Right lobe of liver (tissue), 6 donors: ENCODE measurements at regions of chr2 and their contacts with region 1.

Region 1: GRCh38 chr2:134119713-134120164 is 134.1 kb upstream of the MGAT5 start:
- DNase-seq: peak; percentile 91 to 96 (median 93)
- ATAC-seq: peak; percentile 75 to 87 (median 83)
- H3K4me3 ChIP-seq: peak overlapping the region; percentile 76 to 82 (median 80)
- H3K27ac ChIP-seq: peak overlapping the region; percentile 73 to 91 (median 87)
- H3K4me1 ChIP-seq: peaks cover 0 to 22% (median 9%) of the 10 kb centered on the region in 4 donors
- H3K27me3 ChIP-seq: no peaks in the 10 kb centered on the region
- CTCF ChIP-seq: no peak
- POLR2A ChIP-seq: peak; percentile 86

Region 2: DNA sequence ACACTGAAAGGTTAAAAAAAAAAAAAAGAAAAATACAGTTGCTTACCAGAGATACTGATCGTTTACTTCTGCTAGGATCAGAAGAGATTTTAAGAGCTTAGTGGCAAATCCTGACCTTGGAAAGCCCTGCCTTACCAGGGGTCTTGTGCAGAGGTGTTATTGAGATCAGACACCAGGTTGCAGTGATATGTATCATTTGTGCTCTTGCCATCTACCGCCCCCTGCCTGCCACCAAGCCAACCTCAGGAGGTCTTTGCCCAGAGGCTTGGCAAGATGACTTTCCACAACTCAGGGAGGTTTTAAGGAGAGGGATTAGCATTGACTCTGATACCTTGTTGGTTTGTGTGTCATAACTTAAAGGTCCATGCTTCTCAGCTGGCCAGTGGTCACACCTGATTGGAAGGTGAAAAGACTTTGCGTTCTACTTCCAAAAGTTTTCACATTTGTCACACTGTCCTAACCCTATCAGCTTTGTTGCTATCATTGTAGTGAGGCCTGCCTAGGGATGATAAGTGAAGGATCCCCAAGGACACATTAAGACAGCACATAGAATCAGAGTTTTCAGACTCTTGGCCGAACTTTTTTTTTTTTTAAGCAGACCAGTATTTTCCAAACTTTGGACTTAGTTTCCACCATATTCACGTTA is 87.9 kb after region 1 on chr2:
- intact Hi-C with region 1: loop called in 1 of 2 experiments (anchors 10 kb)
- DNase-seq: peak; percentile 59 to 62 (median 60)
- ATAC-seq: peak; percentile 86 to 93 (median 90)
- H3K4me3 ChIP-seq: no peak overlapping the region
- H3K27ac ChIP-seq: no peak overlapping the region
- H3K4me1 ChIP-seq: no peaks in the 10 kb centered on the region
- H3K27me3 ChIP-seq: no peaks in the 10 kb centered on the region
- CTCF ChIP-seq: peak; percentile 53 to 63 (median 56)
- POLR2A ChIP-seq: no peak